Dorsolateral prefrontal cortex (tissue), 120 donors: ENCODE measurements at regions of chr6 and their contacts with region 1.

Region 1: GRCh38 chr6:75601304-75602245 is at the start of gene SENP6:
- DNase-seq: peak; percentile 59 to 87 (median 72)
- H3K4me3 ChIP-seq: peak within 1 kb of the TSS; percentile 39 to 94 (median 84)
- H3K27ac ChIP-seq: peak within 1 kb of the TSS; percentile 87 to 100 (median 98)
- H3K27me3 ChIP-seq: no peaks in the 10 kb centered on the region
- CTCF ChIP-seq: peak in 16 of 56 donors; percentile 6 to 31 (median 12)
- total RNA-seq, gene SENP6: 99.6 to 164 (median 131) TPM

Region 2: GRCh38 chr6:73653571-73654424 is 1947.8 kb before region 1 on chr6 and contains the start of gene SLC17A5:
- intact Hi-C with region 1: loop called in 1 of 2 experiments (anchors 10 kb)
- DNase-seq: peak; percentile 84 to 95 (median 93)
- H3K4me3 ChIP-seq: peak within 1 kb of the TSS; percentile 63 to 100 (median 97)
- H3K27ac ChIP-seq: peak within 1 kb of the TSS; percentile 74 to 99 (median 97)
- H3K27me3 ChIP-seq: no peaks in the 10 kb centered on the region
- CTCF ChIP-seq: peak in 32 of 56 donors; percentile 4 to 51 (median 29)
- total RNA-seq, gene SLC17A5: 10.8 to 27.7 (median 16.8) TPM

Region 3: GRCh38 chr6:75284632-75285286 is 316.8 kb before region 1 on chr6 and contains the start of gene TMEM30A:
- intact Hi-C with region 1: loop called (anchors 5 to 10 kb)
- DNase-seq: peak; percentile 94 to 99 (median 97)
- H3K4me3 ChIP-seq: peak within 1 kb of the TSS; percentile 63 to 99 (median 92)
- H3K27ac ChIP-seq: peak within 1 kb of the TSS; percentile 27 to 97 (median 90)
- H3K27me3 ChIP-seq: no peaks in the 10 kb centered on the region
- CTCF ChIP-seq: peak in 42 of 56 donors; percentile 10 to 64 (median 32)
- total RNA-seq, gene TMEM30A: 110 to 237 (median 190) TPM

Region 4: DNA sequence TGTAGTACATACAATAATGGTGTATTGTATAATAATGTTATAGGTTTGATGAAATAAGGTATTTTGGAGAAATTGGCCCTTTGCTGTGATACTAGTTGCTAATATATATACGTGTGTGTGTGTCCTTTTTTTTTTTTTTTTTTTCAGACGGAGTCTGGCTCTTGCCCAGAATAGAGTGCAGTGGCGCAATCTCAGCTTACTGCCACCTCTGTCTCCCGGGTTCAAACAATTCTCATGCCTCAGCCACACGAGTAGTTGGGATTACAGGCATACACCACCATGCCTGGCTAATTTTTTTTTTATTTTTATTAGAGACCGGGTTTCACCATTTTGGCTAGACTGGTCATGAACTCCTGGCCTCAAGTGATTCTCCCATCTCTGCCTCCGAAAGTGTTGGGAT is 23.4 kb after region 1 on chr6:
- intact Hi-C with region 1: no loop called
- DNase-seq: no peak
- H3K4me3 ChIP-seq: no peak overlapping the region
- H3K27ac ChIP-seq: no peak overlapping the region
- H3K27me3 ChIP-seq: no peaks in the 10 kb centered on the region
- CTCF ChIP-seq: no peak

Region 5: GRCh38 chr6:75748743-75749501 is 147.3 kb after region 1 on chr6 and contains the start of gene MYO6:
- intact Hi-C with region 1: loop called (anchors 5 to 10 kb)
- DNase-seq: peak; percentile 59 to 89 (median 75)
- H3K4me3 ChIP-seq: peak within 1 kb of the TSS; percentile 68 to 100 (median 95)
- H3K27ac ChIP-seq: peak within 1 kb of the TSS in 58 of 59 donors; percentile 69 to 97 (median 90)
- H3K27me3 ChIP-seq: no peaks in the 10 kb centered on the region
- CTCF ChIP-seq: peak in 7 of 56 donors; percentile 9 to 36 (median 22)
- total RNA-seq, gene MYO6: 37.6 to 112 (median 66.2) TPM